Activated CD4-positive, alpha-beta T cell treated with anti-CD3 and anti-CD28 coated beads for 36 hours (primary cell): ENCODE measurements at regions of chr5 and their contacts with region 1.

Region 1: GRCh38 chr5:40277161-40277906 is 402.4 kb upstream of the PTGER4 start:
- DNase-seq: peak; percentile 59
- ATAC-seq: peak; percentile 77
- H3K4me3 Mint-ChIP-seq: peak overlapping the region; percentile 39
- H3K27ac Mint-ChIP-seq: peak overlapping the region; percentile 95
- H3K4me1 Mint-ChIP-seq: peaks cover 77% of the 10 kb centered on the region
- H3K27me3 Mint-ChIP-seq: no peaks in the 10 kb centered on the region

Region 2: DNA sequence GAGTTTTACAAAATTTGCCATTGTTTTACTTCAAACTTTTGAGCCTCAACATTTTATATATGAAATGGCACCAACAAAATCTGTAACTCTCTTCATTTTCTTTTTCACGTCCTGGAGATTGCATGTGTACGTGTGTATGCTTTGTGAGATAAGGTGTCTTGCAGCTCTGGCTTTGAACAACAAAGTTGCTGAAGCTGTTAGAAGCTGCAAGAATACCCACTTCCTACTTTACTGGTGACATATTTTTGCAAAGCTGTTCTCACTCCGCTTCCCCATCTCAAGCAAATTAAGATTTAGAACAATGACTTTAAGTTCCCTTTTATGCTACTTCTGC is 1099.7 kb before region 1 on chr5:
- CTCF ChIA-PET with region 1: no interaction called
- POLR2A ChIA-PET with region 1: no interaction called
- intact Hi-C with region 1: loop called in 1 of 2 experiments (anchors 10 kb)
- DNase-seq: no peak
- ATAC-seq: no peak
- H3K4me3 Mint-ChIP-seq: peak overlapping the region; percentile 59
- H3K27ac Mint-ChIP-seq: peak overlapping the region; percentile 80
- H3K4me1 Mint-ChIP-seq: peaks cover 94% of the 10 kb centered on the region
- H3K27me3 Mint-ChIP-seq: no peaks in the 10 kb centered on the region

Region 3: DNA sequence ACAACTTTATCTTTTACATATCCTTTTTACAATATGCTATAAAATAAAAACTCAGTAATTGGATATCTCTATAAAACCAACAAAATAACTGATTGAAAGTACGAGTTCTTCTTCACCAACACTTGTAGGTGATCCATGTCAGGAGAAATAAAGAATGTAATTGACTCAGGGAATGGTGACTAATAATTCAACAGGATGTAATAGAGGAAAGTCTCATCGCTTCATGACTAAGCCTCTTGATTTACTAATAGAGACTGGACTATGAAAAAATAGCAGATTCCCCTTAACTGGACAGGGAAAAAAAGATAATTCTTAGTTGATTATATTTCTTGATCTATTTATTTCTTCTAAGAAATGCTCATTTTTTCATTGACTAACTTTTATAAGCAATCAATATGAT is 105.4 kb before region 1 on chr5:
- CTCF ChIA-PET with region 1: no interaction called
- POLR2A ChIA-PET with region 1: no interaction called
- intact Hi-C with region 1: loop called in 1 of 2 experiments (anchors 5 kb)
- DNase-seq: no peak
- ATAC-seq: no peak
- H3K4me3 Mint-ChIP-seq: no peak overlapping the region
- H3K27ac Mint-ChIP-seq: no peak overlapping the region
- H3K4me1 Mint-ChIP-seq: peaks cover 13% of the 10 kb centered on the region
- H3K27me3 Mint-ChIP-seq: no peaks in the 10 kb centered on the region

Region 4: DNA sequence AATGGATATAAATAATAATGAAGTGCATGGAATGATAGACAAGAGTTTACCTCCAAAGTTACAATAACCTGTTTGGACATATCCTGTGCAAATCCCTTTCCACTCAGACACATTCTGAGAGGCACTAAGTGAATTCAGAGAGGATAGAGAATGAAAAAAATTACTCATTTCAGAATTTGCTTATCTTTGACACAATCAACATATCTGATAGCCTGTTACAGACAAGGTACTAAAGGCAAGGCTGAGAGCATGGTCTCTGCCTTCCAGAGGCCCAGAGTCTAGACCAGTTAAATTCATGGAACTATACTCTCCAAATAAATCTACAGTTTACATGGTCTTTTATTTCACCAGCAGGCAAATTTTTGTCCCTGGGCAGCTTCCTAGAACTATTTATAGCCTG is 30.6 kb after region 1 on chr5:
- CTCF ChIA-PET with region 1: interaction called, 3 read pairs
- POLR2A ChIA-PET with region 1: no interaction called
- intact Hi-C with region 1: loop called in 1 of 2 experiments (anchors 1 kb)
- DNase-seq: no peak
- ATAC-seq: peak; percentile 91
- H3K4me3 Mint-ChIP-seq: no peak overlapping the region
- H3K27ac Mint-ChIP-seq: no peak overlapping the region
- H3K4me1 Mint-ChIP-seq: peaks cover 10% of the 10 kb centered on the region
- H3K27me3 Mint-ChIP-seq: no peaks in the 10 kb centered on the region

Region 5: GRCh38 chr5:40404613-40405012 is 127.3 kb after region 1 on chr5:
- CTCF ChIA-PET with region 1: interaction called, 4 read pairs
- POLR2A ChIA-PET with region 1: interaction called, 6 read pairs
- intact Hi-C with region 1: loop called (anchors 1 kb)
- DNase-seq: no peak
- ATAC-seq: peak; percentile 28
- H3K4me3 Mint-ChIP-seq: peak overlapping the region; percentile 18
- H3K27ac Mint-ChIP-seq: peak overlapping the region; percentile 99
- H3K4me1 Mint-ChIP-seq: peaks cover 94% of the 10 kb centered on the region
- H3K27me3 Mint-ChIP-seq: no peaks in the 10 kb centered on the region

Region 6: GRCh38 chr5:40486437-40487275 is 209.3 kb after region 1 on chr5:
- CTCF ChIA-PET with region 1: interaction called, 3 read pairs
- POLR2A ChIA-PET with region 1: interaction called, 8 read pairs
- intact Hi-C with region 1: loop called (anchors 1 kb)
- DNase-seq: peak; percentile 82
- ATAC-seq: peak; percentile 75
- H3K4me3 Mint-ChIP-seq: peak overlapping the region; percentile 12
- H3K27ac Mint-ChIP-seq: peak overlapping the region; percentile 91
- H3K4me1 Mint-ChIP-seq: peaks cover 82% of the 10 kb centered on the region
- H3K27me3 Mint-ChIP-seq: no peaks in the 10 kb centered on the region

Region 7: DNA sequence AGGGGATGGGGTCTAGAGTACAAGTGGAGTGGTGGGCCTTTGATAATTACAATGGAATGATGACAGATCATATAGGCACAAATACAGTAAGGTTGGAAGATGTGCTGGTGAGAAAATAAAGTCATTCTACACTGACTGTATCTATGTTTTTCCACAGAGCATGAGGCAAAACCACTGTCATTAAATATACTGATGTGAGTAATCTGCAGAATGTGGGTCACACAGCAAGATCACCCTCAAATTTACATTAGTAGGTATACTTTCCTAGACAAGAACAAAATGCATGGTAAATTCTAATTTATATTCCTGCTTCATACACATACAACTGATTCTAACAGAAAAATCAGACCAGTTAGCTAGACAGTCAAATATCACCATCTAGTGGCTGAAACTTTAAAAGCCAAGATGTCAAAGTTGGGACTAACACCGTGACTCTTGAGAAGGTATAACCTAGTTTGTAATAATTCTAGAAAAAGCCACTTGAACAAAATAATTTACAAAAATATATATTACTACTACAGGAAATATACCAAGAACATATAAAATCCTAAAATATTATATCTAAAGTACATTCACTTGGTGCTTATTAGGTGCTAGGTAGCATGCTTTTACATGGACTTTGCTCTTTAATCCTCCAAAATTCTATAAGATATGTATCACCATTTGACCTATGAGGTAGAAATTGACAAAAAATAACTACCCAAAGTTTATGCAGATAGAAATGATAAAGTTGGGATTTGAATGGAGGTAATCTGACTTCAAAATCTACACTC is 459.0 kb after region 1 on chr5:
- CTCF ChIA-PET with region 1: no interaction called
- POLR2A ChIA-PET with region 1: no interaction called
- intact Hi-C with region 1: loop called in 1 of 2 experiments (anchors 1 kb)
- DNase-seq: no peak
- ATAC-seq: peak; percentile 72
- H3K4me3 Mint-ChIP-seq: no peak overlapping the region
- H3K27ac Mint-ChIP-seq: peak overlapping the region; percentile 69
- H3K4me1 Mint-ChIP-seq: peaks cover 22% of the 10 kb centered on the region
- H3K27me3 Mint-ChIP-seq: no peaks in the 10 kb centered on the region